ENCODE measurements at regions of chr9 and their contacts with region 1.

Region 1: DNA sequence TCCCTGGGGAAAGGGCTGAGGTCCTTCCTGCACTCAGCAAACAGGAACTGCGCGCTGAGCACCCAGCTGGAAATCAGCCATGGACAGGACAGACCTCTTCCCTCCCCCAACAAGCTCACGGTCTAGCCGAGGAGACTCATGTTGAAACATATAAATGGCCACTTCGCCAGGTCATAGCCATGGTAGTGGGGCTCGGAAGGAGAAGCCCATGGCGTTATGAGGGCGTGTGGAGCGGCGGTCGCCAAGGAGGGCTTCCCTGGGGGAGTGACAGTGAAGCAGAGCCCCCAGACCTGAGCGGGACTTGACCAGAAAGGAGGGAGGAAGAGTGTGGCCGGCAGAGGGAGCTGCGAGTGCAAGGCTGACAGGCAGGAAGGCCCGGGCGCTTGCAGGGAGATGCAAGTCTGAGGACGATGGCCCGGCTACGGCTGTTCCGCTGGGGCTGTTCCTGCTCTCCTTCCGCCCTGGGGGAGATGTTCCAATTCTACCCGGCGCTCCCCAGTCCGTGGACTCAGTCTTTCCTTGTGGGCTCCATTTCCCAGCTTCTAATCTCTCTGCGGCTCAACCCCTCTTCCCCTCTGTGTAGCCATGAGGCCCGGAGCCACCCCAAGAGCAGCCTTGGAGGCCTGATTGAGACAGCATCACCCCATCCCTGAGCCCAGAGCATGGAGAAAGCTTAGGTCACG is 43.9 kb upstream of the PRRC2B start:
- DNase-seq: peak; percentile 95
- ATAC-seq: peak; percentile 97

Region 2: DNA sequence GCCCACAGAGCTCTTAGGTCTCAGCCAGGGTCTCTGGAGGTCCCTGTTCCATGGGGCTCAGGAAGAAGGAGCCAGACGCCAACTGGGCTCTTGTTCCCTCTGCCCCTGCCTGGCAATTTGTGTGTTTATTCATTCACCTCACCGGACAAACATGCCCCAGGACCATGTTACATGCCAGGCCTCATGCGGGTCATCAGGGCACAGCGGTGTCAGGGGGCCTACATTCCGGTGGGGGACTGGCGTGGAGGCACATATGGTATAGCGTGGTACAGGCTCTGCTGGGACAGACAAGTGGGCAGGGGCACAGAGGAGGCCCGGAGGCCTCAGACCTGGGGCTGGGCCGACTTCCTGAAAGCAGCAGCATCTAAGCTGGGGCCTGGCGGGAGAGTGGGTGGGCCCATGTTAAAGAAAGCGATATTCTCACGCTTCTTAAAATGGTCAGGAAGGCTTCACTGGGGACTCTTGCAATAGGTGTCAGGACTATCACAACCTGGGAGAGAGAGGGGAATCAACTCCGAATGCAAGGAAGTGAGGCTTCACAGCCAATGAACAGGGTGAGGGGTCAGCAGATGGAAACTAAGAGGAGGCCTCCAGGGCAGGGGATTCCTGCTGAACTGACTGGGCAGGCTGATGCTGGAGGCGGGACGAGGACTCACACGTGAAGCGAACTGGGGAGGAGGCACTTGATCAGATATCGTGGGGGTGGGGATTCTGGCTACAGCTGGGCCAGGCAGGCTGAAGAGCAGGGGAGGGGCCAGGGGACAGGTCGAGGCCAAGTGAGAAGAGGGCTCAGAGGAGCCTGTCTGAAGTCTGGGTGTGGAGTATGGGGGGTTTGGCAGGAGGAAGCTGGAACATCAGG is 1135.9 kb before region 1 on chr9:
- intact Hi-C with region 1: loop called (anchors 5 kb)
- DNase-seq: no peak
- ATAC-seq: no peak

Region 3: GRCh38 chr9:131502781-131503625 is 153.0 kb after region 1 on chr9 and contains the start of gene POMT1:
- intact Hi-C with region 1: loop called (anchors 5 kb)
- DNase-seq: peak; percentile 89
- ATAC-seq: peak; percentile 97
- total RNA-seq, gene POMT1: 34.7 TPM

Region 4: GRCh38 chr9:131739980-131740648 is 390.1 kb after region 1 on chr9 and contains the start of gene RAPGEF1:
- intact Hi-C with region 1: loop called (anchors 10 kb)
- DNase-seq: peak; percentile 87
- ATAC-seq: peak; percentile 79
- total RNA-seq, gene RAPGEF1: 69.4 TPM